Naive thymus-derived CD4-positive, alpha-beta T cell (primary cell): ENCODE measurements at regions of chr17 and their contacts with region 1.

Region 1: GRCh38 chr17:50949989-50950881 is 84.1 kb upstream of the TOB1 start:
- DNase-seq: peak; percentile 34 to 71 (median 51)
- ATAC-seq: peak; percentile 88
- H3K4me3 ChIP-seq: no peak overlapping the region
- H3K4me3 Mint-ChIP-seq: peak overlapping the region in 2 of 10 donors; percentile 5 to 62
- H3K27ac ChIP-seq: no peak overlapping the region
- H3K27ac Mint-ChIP-seq: peak overlapping the region in 5 of 9 donors; percentile 31 to 90 (median 69)
- H3K4me1 ChIP-seq: peaks cover 0 to 6% of the 10 kb centered on the region in 2 donors
- H3K4me1 Mint-ChIP-seq: peaks cover 14 to 39% (median 24%) of the 10 kb centered on the region in 7 donors
- H3K27me3 ChIP-seq: no peaks in the 10 kb centered on the region
- H3K27me3 Mint-ChIP-seq: no peaks in the 10 kb centered on the region

Region 2: DNA sequence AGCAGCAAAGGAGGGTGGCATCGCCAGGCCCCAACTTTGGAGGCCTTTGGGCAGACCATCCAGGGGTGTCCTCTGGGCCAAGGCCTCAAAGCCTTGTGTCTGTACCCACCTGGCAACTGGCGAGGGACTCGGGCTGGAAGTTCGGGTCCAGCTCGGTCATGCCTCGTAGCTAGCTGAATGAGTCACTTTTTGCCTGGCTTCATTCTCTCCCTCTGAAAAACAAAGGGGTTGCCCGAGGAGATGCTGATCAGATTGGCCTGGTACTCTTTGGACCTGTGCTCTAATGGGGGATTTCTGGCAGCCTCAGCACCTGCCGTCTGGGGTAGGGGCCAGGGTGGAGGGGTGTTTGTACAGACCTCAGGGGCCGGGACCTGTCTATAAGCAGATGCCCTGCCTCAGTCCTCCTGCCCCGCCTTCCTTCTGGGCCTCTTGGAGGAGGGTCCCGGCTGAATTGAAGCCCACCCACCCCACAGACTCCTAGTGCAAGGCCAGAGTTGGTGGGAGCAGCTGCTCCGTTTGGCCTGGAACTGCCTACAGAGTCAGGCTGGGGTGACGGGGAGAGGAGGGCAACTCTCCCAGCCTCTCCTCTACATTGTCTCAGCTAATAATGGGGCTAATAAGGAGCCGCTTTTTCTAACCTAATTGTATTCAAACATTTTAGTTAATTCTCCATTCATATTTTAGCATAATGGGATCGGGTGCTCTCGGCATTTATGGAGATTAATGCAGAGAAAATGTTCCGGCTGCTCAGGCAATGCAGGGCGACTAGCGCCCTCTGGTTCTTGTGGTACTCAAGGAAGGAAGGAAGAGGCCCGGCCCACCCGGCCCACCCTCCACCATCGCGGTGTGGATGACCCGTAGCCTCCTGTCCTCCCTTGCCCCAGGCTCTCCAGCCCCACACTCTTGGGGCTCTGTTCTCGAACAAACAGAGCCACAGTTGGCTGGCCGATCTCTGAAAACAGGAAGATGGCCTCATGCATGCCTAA is 336.9 kb before region 1 on chr17:
- CTCF ChIA-PET with region 1: no interaction called
- POLR2A ChIA-PET with region 1: no interaction called
- intact Hi-C with region 1: no loop called
- DNase-seq: no peak
- ATAC-seq: peak; percentile 23
- H3K4me3 ChIP-seq: no peak overlapping the region
- H3K4me3 Mint-ChIP-seq: no peak overlapping the region
- H3K27ac ChIP-seq: no peak overlapping the region
- H3K27ac Mint-ChIP-seq: no peak overlapping the region
- H3K4me1 ChIP-seq: no peaks in the 10 kb centered on the region
- H3K4me1 Mint-ChIP-seq: peaks cover 3 to 8% (median 6%) of the 10 kb centered on the region in 7 donors
- H3K27me3 ChIP-seq: peaks cover 0 to 2% of the 10 kb centered on the region in 2 donors
- H3K27me3 Mint-ChIP-seq: peaks cover 4 to 13% (median 5%) of the 10 kb centered on the region in 5 donors

Region 3: GRCh38 chr17:50816771-50817751 is 133.2 kb before region 1 on chr17:
- CTCF ChIA-PET with region 1: interaction called, 9 read pairs
- POLR2A ChIA-PET with region 1: no interaction called
- intact Hi-C with region 1: loop called in 1 of 2 experiments (anchors 1 kb)
- DNase-seq: peak in 8 of 9 donors; percentile 32 to 67 (median 50)
- ATAC-seq: peak; percentile 88
- H3K4me3 ChIP-seq: no peak overlapping the region
- H3K4me3 Mint-ChIP-seq: peak overlapping the region in 3 of 10 donors; percentile 26 to 38 (median 32)
- H3K27ac ChIP-seq: no peak overlapping the region
- H3K27ac Mint-ChIP-seq: no peak overlapping the region
- H3K4me1 ChIP-seq: no peaks in the 10 kb centered on the region
- H3K4me1 Mint-ChIP-seq: peaks cover 0 to 9% (median 3%) of the 10 kb centered on the region in 7 donors
- H3K27me3 ChIP-seq: no peaks in the 10 kb centered on the region
- H3K27me3 Mint-ChIP-seq: peaks cover 6 to 33% (median 13%) of the 10 kb centered on the region in 5 donors

Region 4: DNA sequence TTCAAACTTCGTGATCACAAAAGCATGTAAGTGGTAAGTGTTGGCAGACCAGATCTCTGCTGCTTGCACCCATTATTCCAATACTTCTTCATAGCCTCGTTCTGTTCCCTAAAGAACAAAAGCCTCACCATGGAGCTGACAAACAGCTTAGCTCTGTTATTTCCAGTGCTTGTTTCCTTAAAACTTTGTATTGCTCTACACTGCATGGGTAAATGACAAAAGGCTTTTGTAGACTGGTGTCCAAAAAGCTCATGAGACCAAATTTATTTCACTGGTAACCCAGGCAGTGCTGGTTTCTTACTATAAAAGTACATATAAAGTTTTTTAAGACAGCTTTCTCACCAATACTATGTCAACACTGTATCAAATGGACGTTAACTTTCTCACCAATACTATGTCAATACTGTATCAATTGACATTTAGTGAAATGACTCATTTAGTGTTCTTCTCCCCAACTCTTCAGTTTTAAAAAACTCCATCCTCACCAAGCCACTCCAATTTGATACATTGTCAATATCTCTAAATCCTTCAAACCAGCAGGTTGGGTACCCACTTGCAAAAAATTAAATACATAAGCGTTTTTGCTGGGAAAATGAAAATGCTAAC is 89.1 kb before region 1 on chr17:
- CTCF ChIA-PET with region 1: interaction called, 393 read pairs
- POLR2A ChIA-PET with region 1: interaction called, 664 read pairs
- intact Hi-C with region 1: loop called (anchors 1 to 5 kb)
- DNase-seq: no peak
- ATAC-seq: no peak
- H3K4me3 ChIP-seq: no peak overlapping the region
- H3K4me3 Mint-ChIP-seq: peak overlapping the region in 5 of 10 donors; percentile 7 to 65 (median 43)
- H3K27ac ChIP-seq: no peak overlapping the region
- H3K27ac Mint-ChIP-seq: peak overlapping the region in 7 of 9 donors; percentile 5 to 86 (median 50)
- H3K4me1 ChIP-seq: peaks cover 26 to 30% of the 10 kb centered on the region in 2 donors
- H3K4me1 Mint-ChIP-seq: peaks cover 24 to 52% (median 36%) of the 10 kb centered on the region in 7 donors
- H3K27me3 ChIP-seq: no peaks in the 10 kb centered on the region
- H3K27me3 Mint-ChIP-seq: peaks cover 0 to 4% (median 0%) of the 10 kb centered on the region in 5 donors

Region 5: DNA sequence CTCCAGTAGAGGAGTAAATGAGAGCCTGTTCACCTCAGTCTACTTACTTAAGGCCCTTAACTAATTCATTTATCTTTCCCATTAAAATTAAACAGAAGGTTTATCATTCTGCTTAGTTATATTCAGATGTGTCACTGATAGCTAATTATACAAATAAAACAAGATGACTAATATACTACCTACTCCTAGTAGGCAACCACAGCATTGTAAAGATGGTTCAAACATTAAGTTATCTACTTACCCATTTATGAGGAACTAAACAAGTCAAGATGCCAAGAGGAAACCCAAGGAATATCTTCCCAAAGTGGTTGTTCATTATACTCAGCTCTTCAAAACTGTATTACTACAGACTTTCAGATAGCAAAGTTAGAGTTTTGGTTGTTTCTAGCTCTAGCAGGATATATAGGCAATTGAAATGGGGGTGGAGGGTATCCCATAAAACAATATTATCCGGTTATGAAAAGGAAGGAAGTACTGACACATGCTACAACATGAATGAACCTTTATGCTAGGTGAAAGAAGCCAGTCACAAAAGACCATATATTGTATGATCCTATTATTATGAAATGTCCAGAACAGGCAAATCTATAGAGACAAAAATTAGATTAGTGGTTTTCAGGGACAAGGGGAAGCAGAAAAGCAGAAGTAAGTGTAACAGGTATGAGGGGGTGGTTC is 114.0 kb after region 1 on chr17:
- CTCF ChIA-PET with region 1: no interaction called
- POLR2A ChIA-PET with region 1: no interaction called
- intact Hi-C with region 1: no loop called
- DNase-seq: no peak
- ATAC-seq: no peak
- H3K4me3 ChIP-seq: no peak overlapping the region
- H3K4me3 Mint-ChIP-seq: no peak overlapping the region
- H3K27ac ChIP-seq: no peak overlapping the region
- H3K27ac Mint-ChIP-seq: peak overlapping the region in 1 of 9 donors; percentile 13
- H3K4me1 ChIP-seq: peaks cover 0 to 3% of the 10 kb centered on the region in 2 donors
- H3K4me1 Mint-ChIP-seq: peaks cover 3 to 34% (median 29%) of the 10 kb centered on the region in 7 donors
- H3K27me3 ChIP-seq: no peaks in the 10 kb centered on the region
- H3K27me3 Mint-ChIP-seq: no peaks in the 10 kb centered on the region

Region 6: GRCh38 chr17:51087072-51087757 is 137.0 kb after region 1 on chr17:
- CTCF ChIA-PET with region 1: no interaction called
- POLR2A ChIA-PET with region 1: no interaction called
- intact Hi-C with region 1: no loop called
- DNase-seq: no peak
- ATAC-seq: no peak
- H3K4me3 ChIP-seq: no peak overlapping the region
- H3K4me3 Mint-ChIP-seq: no peak overlapping the region
- H3K27ac ChIP-seq: no peak overlapping the region
- H3K27ac Mint-ChIP-seq: no peak overlapping the region
- H3K4me1 ChIP-seq: no peaks in the 10 kb centered on the region
- H3K4me1 Mint-ChIP-seq: peaks cover 10 to 36% (median 21%) of the 10 kb centered on the region in 7 donors
- H3K27me3 ChIP-seq: no peaks in the 10 kb centered on the region
- H3K27me3 Mint-ChIP-seq: no peaks in the 10 kb centered on the region

Region 7: GRCh38 chr17:52505601-52506000 is 1555.4 kb after region 1 on chr17:
- CTCF ChIA-PET with region 1: no interaction called
- POLR2A ChIA-PET with region 1: no interaction called
- intact Hi-C with region 1: no loop called
- DNase-seq: no peak
- ATAC-seq: no peak
- H3K4me3 ChIP-seq: no peak overlapping the region
- H3K4me3 Mint-ChIP-seq: no peak overlapping the region
- H3K27ac ChIP-seq: no peak overlapping the region
- H3K27ac Mint-ChIP-seq: no peak overlapping the region
- H3K4me1 ChIP-seq: no peaks in the 10 kb centered on the region
- H3K4me1 Mint-ChIP-seq: no peaks in the 10 kb centered on the region
- H3K27me3 ChIP-seq: no peaks in the 10 kb centered on the region
- H3K27me3 Mint-ChIP-seq: no peaks in the 10 kb centered on the region